ENCODE measurements at regions of chr7 and their contacts with region 1.

Region 1: DNA sequence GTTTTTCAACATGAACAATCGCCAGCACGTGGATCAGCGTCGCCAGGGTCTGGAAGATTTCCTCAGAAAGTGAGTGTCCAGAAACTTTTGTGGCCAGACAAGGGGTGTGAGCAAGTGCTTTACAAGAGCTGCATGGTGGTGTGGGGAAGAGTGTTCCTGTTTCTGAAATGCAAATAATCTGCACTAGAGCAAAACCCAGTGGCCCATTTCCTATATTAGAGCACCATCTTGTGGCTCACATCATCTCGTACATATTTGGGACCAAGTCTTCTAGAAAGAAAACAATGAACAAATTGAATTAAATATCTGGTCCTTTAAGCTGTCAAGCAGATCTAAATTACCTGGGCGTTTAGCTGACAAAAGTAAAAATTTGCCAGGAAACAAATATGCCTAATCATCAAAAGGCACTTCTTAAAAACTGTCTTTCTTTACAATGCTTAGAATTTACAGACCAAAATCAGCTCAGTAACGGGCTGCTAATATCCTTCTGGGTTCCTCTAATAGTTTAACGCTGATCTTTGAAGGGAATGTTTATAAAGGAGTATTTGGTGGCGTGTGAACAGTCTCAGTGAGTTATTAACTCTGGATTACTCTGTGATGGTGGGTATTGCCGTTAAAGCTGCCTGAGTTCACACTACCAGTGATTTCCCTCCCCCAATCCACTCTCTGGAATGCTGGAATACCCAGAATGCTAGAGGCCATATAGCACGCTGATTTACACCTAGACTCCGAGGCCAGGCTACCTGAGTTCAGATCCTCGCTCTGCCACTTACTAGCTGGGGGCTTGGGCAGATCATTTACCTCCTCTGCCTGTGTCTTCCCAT is 73.6 kb downstream of the SNX10 start:
- DNase-seq: peak; percentile 57
- H3K4me3 ChIP-seq: no peak overlapping the region
- H3K27ac ChIP-seq: no peak overlapping the region
- H3K27me3 ChIP-seq: peaks cover 24% of the 10 kb centered on the region
- CTCF ChIP-seq: peak; percentile 74

Region 2: GRCh38 chr7:25851332-25852210 is 513.7 kb before region 1 on chr7:
- CTCF ChIA-PET with region 1: interaction called, 23 read pairs
- POLR2A ChIA-PET with region 1: no interaction called
- DNase-seq: peak; percentile 57
- H3K4me3 ChIP-seq: no peak overlapping the region
- H3K27ac ChIP-seq: no peak overlapping the region
- H3K27me3 ChIP-seq: no peaks in the 10 kb centered on the region
- CTCF ChIP-seq: peak; percentile 92

Region 3: DNA sequence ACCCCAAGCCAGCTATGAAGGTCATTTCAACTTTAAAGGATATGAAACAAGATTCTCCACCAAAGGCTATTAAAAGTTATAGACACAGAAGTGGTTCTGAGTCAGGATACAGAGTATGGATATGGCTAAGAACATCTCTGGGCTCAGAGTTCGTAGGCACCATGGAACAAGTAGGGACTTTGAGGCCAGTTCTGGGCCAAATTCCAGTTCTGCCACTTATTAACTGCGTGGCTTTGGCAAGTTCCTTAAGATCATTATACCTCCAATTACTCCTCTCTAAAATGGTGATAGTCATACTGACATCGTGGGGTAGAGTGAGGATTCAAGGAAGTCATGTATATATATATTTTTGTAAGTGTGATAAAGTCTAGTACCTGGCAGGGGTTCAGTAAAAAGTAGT is 319.1 kb before region 1 on chr7:
- CTCF ChIA-PET with region 1: no interaction called
- POLR2A ChIA-PET with region 1: no interaction called
- DNase-seq: no peak
- H3K4me3 ChIP-seq: no peak overlapping the region
- H3K27ac ChIP-seq: no peak overlapping the region
- H3K27me3 ChIP-seq: no peaks in the 10 kb centered on the region
- CTCF ChIP-seq: no peak

Region 4: GRCh38 chr7:26090927-26091519 is 274.3 kb before region 1 on chr7:
- CTCF ChIA-PET with region 1: interaction called, 278 read pairs
- POLR2A ChIA-PET with region 1: no interaction called
- DNase-seq: peak; percentile 26
- H3K4me3 ChIP-seq: no peak overlapping the region
- H3K27ac ChIP-seq: no peak overlapping the region
- H3K27me3 ChIP-seq: peaks cover 5% of the 10 kb centered on the region
- CTCF ChIP-seq: peak; percentile 87

Region 5: GRCh38 chr7:26305463-26306273 is 59.6 kb before region 1 on chr7:
- CTCF ChIA-PET with region 1: no interaction called
- POLR2A ChIA-PET with region 1: no interaction called
- DNase-seq: no peak
- H3K4me3 ChIP-seq: no peak overlapping the region
- H3K27ac ChIP-seq: no peak overlapping the region
- H3K27me3 ChIP-seq: peaks cover 5% of the 10 kb centered on the region
- CTCF ChIP-seq: no peak

Region 6: GRCh38 chr7:26381476-26382353 is 16.4 kb after region 1 on chr7:
- CTCF ChIA-PET with region 1: interaction called, 21 read pairs
- POLR2A ChIA-PET with region 1: no interaction called
- DNase-seq: no peak
- H3K4me3 ChIP-seq: no peak overlapping the region
- H3K27ac ChIP-seq: no peak overlapping the region
- H3K27me3 ChIP-seq: peaks cover 21% of the 10 kb centered on the region
- CTCF ChIP-seq: no peak

Region 7: DNA sequence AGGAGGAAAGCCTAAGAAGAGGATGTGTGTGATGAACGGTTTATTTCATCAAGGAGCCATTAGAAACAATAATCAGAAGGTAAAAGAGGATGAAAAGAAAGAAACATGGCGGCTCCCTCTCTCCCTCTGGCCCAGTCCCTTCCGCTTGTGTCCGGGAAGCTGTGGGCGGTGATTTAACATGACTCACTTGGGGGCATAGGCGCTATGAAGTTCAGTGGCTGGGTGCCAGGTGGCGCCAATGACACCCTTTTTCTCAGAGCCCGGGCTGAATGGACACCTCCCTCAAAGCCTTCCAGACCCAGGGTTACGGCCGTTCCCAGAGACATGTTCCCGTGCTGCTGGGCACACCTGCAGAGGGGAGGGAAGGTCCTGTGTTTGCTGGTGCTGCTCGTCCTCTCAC is 255.1 kb after region 1 on chr7:
- CTCF ChIA-PET with region 1: no interaction called
- POLR2A ChIA-PET with region 1: no interaction called
- DNase-seq: no peak
- H3K4me3 ChIP-seq: no peak overlapping the region
- H3K27ac ChIP-seq: no peak overlapping the region
- H3K27me3 ChIP-seq: peaks cover 5% of the 10 kb centered on the region
- CTCF ChIP-seq: no peak

Region 8: DNA sequence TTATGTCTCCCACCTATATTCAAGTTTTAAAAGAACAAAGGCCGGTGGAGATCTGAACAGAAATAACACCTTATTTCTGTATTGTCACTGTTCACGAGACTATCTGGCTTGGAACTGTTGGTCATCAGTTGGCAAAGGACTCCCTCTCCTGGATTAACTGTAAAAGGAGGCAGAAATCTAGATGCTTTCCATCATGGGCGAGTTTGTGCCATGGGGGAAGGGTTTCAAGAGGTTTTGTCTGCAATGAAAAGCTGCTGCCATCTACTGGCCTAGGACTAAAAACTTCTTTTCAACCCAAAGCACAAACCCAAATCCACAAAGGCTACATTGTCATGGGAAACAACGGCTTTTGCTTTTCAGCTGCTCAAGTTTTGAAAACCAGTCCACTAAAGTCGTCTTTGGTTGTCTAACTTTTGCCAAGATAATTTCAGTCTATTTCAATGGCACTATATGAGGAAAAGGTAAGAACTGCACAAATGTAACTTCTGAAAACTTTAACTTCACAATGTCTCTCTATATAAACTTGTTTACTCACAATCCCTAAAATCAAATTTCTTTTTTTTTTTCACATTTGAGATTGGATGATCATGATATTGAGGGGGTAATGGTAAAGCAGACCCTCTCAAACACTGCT is 302.3 kb after region 1 on chr7:
- CTCF ChIA-PET with region 1: interaction called, 179 read pairs
- POLR2A ChIA-PET with region 1: no interaction called
- DNase-seq: peak; percentile 56
- H3K4me3 ChIP-seq: no peak overlapping the region
- H3K27ac ChIP-seq: no peak overlapping the region
- H3K27me3 ChIP-seq: no peaks in the 10 kb centered on the region
- CTCF ChIP-seq: peak; percentile 92

Region 9: GRCh38 chr7:27150568-27151340 is 785.5 kb after region 1 on chr7:
- CTCF ChIA-PET with region 1: interaction called, 57 read pairs
- POLR2A ChIA-PET with region 1: no interaction called
- DNase-seq: no peak
- H3K4me3 ChIP-seq: peak overlapping the region; percentile 73
- H3K27ac ChIP-seq: peak overlapping the region; percentile 69
- H3K27me3 ChIP-seq: peaks cover 3% of the 10 kb centered on the region
- CTCF ChIP-seq: peak; percentile 79